ENCODE measurements at regions of chr4 and their contacts with region 1.

Region 1: DNA sequence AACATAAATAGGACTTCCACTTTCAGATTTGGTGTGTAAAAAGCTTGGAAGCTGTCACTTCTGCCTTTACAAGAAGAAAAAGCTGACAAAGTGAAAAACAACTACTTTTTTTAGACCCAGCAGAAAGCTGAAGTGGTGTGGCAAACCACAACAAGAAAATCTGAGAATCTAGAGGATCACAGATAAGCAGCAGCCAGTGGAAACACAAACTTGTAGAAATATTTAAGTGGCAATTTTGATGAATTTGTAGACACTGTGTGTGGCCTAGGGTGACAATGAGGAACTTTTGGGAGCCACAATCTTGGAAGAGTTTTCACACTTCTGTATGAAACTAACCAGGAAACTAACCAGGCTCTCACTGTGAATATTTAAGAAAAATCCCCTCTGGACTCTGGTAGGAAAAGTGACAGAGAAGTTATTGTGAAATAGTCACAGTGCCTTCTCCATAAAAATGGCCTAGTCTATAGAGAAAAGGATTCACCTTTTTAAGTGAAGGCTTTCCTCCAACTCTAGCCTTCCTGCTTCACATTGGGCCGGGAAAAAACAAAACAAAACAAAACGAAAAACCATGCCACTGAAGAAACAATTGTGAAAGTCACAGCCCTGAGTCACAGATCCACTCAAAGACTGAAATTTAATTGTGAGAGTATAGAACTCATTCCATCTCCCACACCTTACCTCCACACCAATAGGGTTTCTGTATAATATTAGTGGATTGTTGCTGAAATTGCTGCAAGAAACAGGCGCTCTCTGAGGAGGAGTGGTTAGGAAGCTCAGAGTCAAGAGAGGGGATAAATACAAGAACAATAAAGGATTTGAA is 26.7 kb upstream of the GUCY1A1 start:
- DNase-seq: peak; percentile 76
- H3K4me3 Mint-ChIP-seq: peak overlapping the region; percentile 15
- H3K27ac Mint-ChIP-seq: peak overlapping the region; percentile 48
- H3K4me1 Mint-ChIP-seq: peaks cover 19% of the 10 kb centered on the region
- H3K27me3 Mint-ChIP-seq: peaks cover 19% of the 10 kb centered on the region

Region 2: DNA sequence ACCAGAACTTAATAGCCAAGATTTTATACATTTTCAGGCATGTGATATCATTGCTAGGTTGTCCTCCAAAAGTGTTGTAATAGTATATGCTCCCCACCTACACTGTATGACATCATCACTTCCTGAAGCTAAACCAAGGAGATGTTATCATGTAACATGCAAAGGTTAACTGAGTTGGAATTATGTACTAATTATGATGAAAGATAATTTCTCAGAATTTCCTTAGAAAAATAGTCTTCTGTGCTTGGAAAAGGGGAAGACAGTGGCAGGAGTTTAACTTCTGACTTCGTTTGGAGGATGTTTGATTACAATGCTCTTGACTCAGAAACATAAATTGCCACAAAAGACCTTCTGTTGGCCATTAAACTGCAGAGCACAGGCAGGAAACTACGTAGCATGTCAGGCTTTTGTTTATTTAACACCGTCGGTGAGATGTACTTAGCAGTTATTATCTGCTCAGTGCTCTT is 56.9 kb before region 1 on chr4:
- intact Hi-C with region 1: loop called (anchors 1 kb)
- DNase-seq: peak; percentile 67
- H3K4me3 Mint-ChIP-seq: peak overlapping the region; percentile 19
- H3K27ac Mint-ChIP-seq: peak overlapping the region; percentile 60
- H3K4me1 Mint-ChIP-seq: peaks cover 11% of the 10 kb centered on the region
- H3K27me3 Mint-ChIP-seq: no peaks in the 10 kb centered on the region

Region 3: DNA sequence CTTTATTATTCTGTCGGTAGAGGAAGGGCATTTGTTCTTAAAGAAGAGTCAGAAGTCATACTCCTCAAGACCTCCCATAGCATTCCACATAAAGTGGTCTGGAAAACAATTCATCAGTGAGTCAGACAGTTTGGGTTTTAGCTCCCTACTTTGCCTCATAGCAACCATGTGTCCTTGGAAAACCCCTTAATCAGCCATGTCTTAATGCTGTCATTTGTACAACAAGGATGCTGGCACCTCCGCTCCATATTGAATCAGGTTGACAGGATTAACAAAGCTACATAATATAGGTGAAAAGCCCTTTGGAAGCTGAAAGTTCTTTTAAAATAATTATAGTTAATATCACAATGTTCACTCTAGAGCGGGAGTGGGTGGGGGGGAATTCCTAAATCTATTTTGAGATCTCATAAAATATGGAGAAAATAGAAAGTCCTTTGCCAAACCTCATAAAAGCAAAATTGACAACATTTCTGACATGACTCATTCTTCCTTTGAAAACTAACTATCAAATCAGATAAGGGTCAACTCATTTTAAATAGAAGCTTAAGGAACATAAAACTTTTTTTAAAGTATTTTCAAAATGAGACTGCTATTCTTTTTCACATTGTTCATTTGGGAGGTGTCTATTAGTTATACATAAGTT is 10.6 kb before region 1 on chr4:
- intact Hi-C with region 1: loop called (anchors 1 kb)
- DNase-seq: no peak
- H3K4me3 Mint-ChIP-seq: peak overlapping the region; percentile 1
- H3K27ac Mint-ChIP-seq: peak overlapping the region; percentile 56
- H3K4me1 Mint-ChIP-seq: peaks cover 17% of the 10 kb centered on the region
- H3K27me3 Mint-ChIP-seq: no peaks in the 10 kb centered on the region

Measured in activated CD4-positive, alpha-beta T cell treated with anti-CD3 and anti-CD28 coated beads, Interleukin-2, amount 10 ng/mL, durations not matched to agents 24 days and 14 days (primary cell).